ENCODE measurements at regions of chr22 and their contacts with region 1.

Region 1: GRCh38 chr22:32164075-32164860 is 5.2 kb upstream of the C22orf42 start:
- DNase-seq: no peak
- ATAC-seq: no peak
- H3K4me3 ChIP-seq: no peak overlapping the region
- H3K27ac ChIP-seq: no peak overlapping the region
- H3K4me1 ChIP-seq: peaks cover 0 to 8% (median 0%) of the 10 kb centered on the region in 9 donors
- H3K27me3 ChIP-seq: peaks cover 0 to 10% (median 2%) of the 10 kb centered on the region in 7 donors
- CTCF ChIP-seq: no peak

Region 2: GRCh38 chr22:31911565-31912406 is 252.5 kb before region 1 on chr22:
- intact Hi-C with region 1: no loop called
- DNase-seq: no peak
- ATAC-seq: no peak
- H3K4me3 ChIP-seq: no peak overlapping the region
- H3K27ac ChIP-seq: no peak overlapping the region
- H3K4me1 ChIP-seq: peaks cover 0 to 4% (median 0%) of the 10 kb centered on the region in 9 donors
- H3K27me3 ChIP-seq: no peaks in the 10 kb centered on the region
- CTCF ChIP-seq: no peak

Region 3: GRCh38 chr22:32024796-32025195 is 139.5 kb before region 1 on chr22:
- intact Hi-C with region 1: loop called in 1 of 10 experiments (anchors 5 kb)
- DNase-seq: no peak
- ATAC-seq: no peak
- H3K4me3 ChIP-seq: no peak overlapping the region
- H3K27ac ChIP-seq: no peak overlapping the region
- H3K4me1 ChIP-seq: no peaks in the 10 kb centered on the region
- H3K27me3 ChIP-seq: peaks cover 0 to 1% (median 0%) of the 10 kb centered on the region in 7 donors
- CTCF ChIP-seq: no peak

Region 4: DNA sequence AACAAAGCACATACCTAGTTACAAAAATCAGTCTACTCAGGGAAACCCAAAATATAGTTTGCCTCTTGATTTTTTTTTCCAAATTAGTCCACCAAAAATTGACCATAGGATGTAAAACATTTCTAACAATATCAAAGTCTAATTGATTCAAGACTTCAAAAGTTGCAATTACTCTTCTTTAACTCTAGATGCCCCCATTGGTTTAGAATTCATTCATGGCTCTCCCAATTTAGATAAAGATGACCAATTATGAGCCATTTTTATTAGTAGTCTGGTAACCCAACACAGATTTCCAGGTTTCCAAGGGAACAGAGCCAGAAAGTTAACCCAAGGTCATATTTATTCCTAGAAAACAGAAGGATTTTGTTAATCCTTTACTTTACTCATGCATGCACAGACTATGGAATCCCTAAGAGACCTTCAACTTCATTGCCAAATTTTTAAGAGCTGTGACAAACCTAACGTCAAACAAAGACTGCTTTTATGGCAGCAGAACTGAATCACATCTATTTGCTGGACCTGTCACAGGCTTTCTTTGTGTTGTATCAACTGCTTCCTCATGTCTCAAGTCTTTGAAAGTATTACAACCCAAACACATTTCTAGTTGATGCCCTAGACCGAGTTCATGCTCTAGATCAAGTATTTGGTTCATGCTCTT is 60.5 kb before region 1 on chr22:
- intact Hi-C with region 1: loop called in 1 of 10 experiments (anchors 10 kb)
- DNase-seq: no peak
- ATAC-seq: no peak
- H3K4me3 ChIP-seq: no peak overlapping the region
- H3K27ac ChIP-seq: no peak overlapping the region
- H3K4me1 ChIP-seq: no peaks in the 10 kb centered on the region
- H3K27me3 ChIP-seq: no peaks in the 10 kb centered on the region
- CTCF ChIP-seq: peak in 7 of 9 donors; percentile 30 to 57 (median 46)

Region 5: DNA sequence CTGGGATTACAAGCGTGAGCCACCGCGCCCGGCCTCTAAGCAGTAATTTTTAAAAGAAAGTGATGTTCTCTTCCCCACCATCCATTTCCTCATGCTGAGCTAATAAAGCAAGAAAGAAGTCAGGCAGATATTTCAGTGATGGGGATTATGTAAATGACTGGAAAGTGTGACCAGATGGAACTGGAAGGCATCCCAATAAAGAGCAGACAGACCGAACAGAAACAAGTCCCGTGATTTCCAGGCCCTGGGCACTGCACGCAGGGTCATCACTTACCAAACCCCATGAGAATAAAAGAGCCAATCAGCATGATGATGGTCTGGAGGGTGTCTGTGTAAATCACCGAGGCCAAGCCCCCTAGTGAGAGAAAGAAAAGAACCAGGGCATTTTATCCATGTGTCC is 72.7 kb after region 1 on chr22:
- intact Hi-C with region 1: no loop called
- DNase-seq: no peak
- ATAC-seq: no peak
- H3K4me3 ChIP-seq: no peak overlapping the region
- H3K27ac ChIP-seq: no peak overlapping the region
- H3K4me1 ChIP-seq: no peaks in the 10 kb centered on the region
- H3K27me3 ChIP-seq: peaks cover 0 to 15% (median 4%) of the 10 kb centered on the region in 7 donors
- CTCF ChIP-seq: no peak

Measured in heart right ventricle (tissue), 16 donors.